ENCODE measurements at regions of chr6 and their contacts with region 1.

Region 1: GRCh38 chr6:10694302-10695085 is at the starts of genes C6orf52 and PAK1IP1:
- DNase-seq: peak; percentile 95
- ATAC-seq: peak; percentile 97
- H3K4me3 Mint-ChIP-seq: peak within 1 kb of the TSS; percentile 93
- H3K27ac Mint-ChIP-seq: peak within 1 kb of the TSS; percentile 100
- H3K4me1 Mint-ChIP-seq: peaks cover 29% of the 10 kb centered on the region
- H3K27me3 Mint-ChIP-seq: no peaks in the 10 kb centered on the region
- total RNA-seq, gene C6orf52: 1.2 to 2.4 TPM
- total RNA-seq, gene PAK1IP1: 35.6 to 39.4 TPM

Region 2: DNA sequence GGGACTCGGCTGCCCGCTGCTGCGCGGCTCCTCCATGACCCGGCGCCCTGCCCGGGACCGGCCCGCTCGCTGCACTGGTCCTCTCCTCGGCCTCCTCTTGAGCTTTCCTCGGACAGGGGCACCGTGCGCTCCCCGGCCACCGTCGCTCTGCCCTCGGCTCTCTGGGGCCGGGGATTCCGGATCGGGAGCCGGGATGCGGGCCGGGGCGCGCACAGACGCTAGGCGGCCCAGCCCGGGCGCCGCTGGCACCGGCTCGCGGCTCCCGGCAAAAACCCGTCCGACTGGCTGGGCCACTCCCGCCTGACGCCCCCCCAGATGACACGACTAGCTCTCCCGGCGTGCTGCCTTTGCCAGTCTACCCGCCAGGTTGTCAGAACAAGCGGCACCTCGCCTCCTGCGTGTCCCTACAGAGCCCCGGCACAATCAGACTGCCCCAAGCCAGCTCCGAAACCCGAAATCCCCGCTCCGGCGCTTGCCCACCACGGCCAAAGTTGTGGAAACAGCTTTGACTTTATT is 281.7 kb before region 1 on chr6:
- CTCF ChIA-PET with region 1: no interaction called
- POLR2A ChIA-PET with region 1: no interaction called
- intact Hi-C with region 1: no loop called
- DNase-seq: no peak
- ATAC-seq: no peak
- H3K4me3 Mint-ChIP-seq: peak overlapping the region; percentile 80
- H3K27ac Mint-ChIP-seq: no peak overlapping the region
- H3K4me1 Mint-ChIP-seq: peaks cover 40% of the 10 kb centered on the region
- H3K27me3 Mint-ChIP-seq: peaks cover 85% of the 10 kb centered on the region

Region 3: GRCh38 chr6:10478187-10479040 is 216.1 kb before region 1 on chr6:
- CTCF ChIA-PET with region 1: no interaction called
- POLR2A ChIA-PET with region 1: no interaction called
- intact Hi-C with region 1: loop called in 1 of 2 experiments (anchors 1 kb)
- DNase-seq: no peak
- ATAC-seq: peak; percentile 44
- H3K4me3 Mint-ChIP-seq: no peak overlapping the region
- H3K27ac Mint-ChIP-seq: peak overlapping the region; percentile 7
- H3K4me1 Mint-ChIP-seq: no peaks in the 10 kb centered on the region
- H3K27me3 Mint-ChIP-seq: peaks cover 5% of the 10 kb centered on the region

Region 4: GRCh38 chr6:10528170-10528981 is 166.1 kb before region 1 on chr6:
- CTCF ChIA-PET with region 1: no interaction called
- POLR2A ChIA-PET with region 1: no interaction called
- intact Hi-C with region 1: loop called (anchors 1 to 2 kb)
- DNase-seq: peak; percentile 48
- ATAC-seq: peak; percentile 85
- H3K4me3 Mint-ChIP-seq: peak overlapping the region; percentile 76
- H3K27ac Mint-ChIP-seq: peak overlapping the region; percentile 86
- H3K4me1 Mint-ChIP-seq: peaks cover 58% of the 10 kb centered on the region
- H3K27me3 Mint-ChIP-seq: peaks cover 3% of the 10 kb centered on the region

Region 5: GRCh38 chr6:10582774-10583508 is 111.6 kb before region 1 on chr6:
- CTCF ChIA-PET with region 1: no interaction called
- POLR2A ChIA-PET with region 1: no interaction called
- intact Hi-C with region 1: no loop called
- DNase-seq: no peak
- ATAC-seq: no peak
- H3K4me3 Mint-ChIP-seq: no peak overlapping the region
- H3K27ac Mint-ChIP-seq: no peak overlapping the region
- H3K4me1 Mint-ChIP-seq: no peaks in the 10 kb centered on the region
- H3K27me3 Mint-ChIP-seq: no peaks in the 10 kb centered on the region

Region 6: DNA sequence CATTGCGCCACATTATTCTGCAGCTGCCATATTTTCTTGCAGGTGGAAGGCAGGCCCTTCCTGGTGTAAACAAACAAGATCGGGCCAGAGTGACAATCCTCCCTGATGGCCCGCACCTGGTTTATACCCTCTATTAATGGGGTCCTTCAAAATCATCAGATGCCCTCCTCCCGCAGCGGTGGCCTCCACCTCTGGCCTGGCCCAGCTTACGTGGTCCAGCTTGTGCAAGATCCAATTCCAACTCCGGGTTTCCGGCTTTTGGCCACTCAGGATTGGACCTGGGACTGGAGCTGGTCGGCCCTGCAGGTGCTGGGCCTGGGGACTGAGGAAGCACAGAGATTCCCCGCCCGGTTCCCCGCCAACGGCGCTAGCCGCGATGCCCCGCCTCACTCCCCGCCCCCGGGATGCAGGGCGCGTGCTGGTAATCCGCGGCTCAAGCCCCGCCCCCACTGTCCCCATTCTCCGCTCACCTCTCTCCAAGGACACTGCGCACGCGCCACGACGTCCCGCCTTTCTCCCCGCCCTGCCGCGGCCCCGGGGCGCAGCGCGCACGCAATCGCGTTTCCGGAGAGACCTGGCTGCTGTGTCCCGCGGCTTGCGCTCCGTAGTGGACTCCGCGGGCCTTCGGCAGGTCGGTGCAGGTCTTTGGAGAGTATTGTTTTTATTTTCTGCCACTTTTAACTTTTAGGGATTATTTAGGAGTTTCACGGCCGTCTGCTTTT is 52.9 kb after region 1 on chr6 and contains the start of gene TMEM14B:
- CTCF ChIA-PET with region 1: interaction called, 3 read pairs
- POLR2A ChIA-PET with region 1: interaction called, 10 read pairs
- intact Hi-C with region 1: loop called (anchors 1 kb)
- DNase-seq: peak; percentile 100
- ATAC-seq: peak; percentile 98
- H3K4me3 Mint-ChIP-seq: peak within 1 kb of the TSS; percentile 95
- H3K27ac Mint-ChIP-seq: peak within 1 kb of the TSS; percentile 95
- H3K4me1 Mint-ChIP-seq: peaks cover 40% of the 10 kb centered on the region
- H3K27me3 Mint-ChIP-seq: no peaks in the 10 kb centered on the region
- total RNA-seq, gene TMEM14B: 77.2 to 99.3 TPM

Region 7: GRCh38 chr6:11232193-11232769 is 537.8 kb after region 1 on chr6 and contains the start of gene NEDD9:
- CTCF ChIA-PET with region 1: no interaction called
- POLR2A ChIA-PET with region 1: no interaction called
- intact Hi-C with region 1: loop called in 1 of 2 experiments (anchors 10 kb)
- DNase-seq: peak; percentile 97
- ATAC-seq: peak; percentile 96
- H3K4me3 Mint-ChIP-seq: peak within 1 kb of the TSS; percentile 81
- H3K27ac Mint-ChIP-seq: peak within 1 kb of the TSS; percentile 95
- H3K4me1 Mint-ChIP-seq: peaks cover 65% of the 10 kb centered on the region
- H3K27me3 Mint-ChIP-seq: no peaks in the 10 kb centered on the region
- total RNA-seq, gene NEDD9: 23.6 to 27.3 TPM

Measured in activated CD4-positive, alpha-beta T cell treated with anti-CD3 and anti-CD28 coated beads for 36 hours (primary cell).